ENCODE measurements at regions of chr19 and their contacts with region 1.

Region 1: DNA sequence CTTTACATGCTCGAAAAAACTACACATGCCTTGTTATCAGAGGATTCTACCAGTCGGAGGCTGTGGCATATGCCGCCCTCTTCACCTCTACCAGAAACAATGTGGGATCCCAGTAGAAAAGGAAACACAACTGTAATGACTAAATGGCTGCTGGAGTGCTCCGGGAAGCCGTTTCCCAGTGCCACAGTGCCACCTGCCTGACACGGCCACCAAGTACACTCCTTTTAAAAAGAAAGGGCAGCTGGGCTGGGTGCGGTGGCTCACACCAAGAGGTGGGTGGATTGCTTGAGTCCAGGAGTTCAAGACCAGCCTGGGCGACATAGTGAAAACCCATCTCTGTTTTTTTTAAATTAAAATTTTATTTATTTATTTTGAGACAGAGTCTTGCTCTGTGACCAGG is 67.3 kb downstream of the TRPM4 start:
- DNase-seq: peak in 4 of 5 donors; percentile 34 to 70 (median 46)
- ATAC-seq: peak; percentile 29 to 86 (median 77)
- H3K4me3 ChIP-seq: no peak overlapping the region
- H3K27ac ChIP-seq: no peak overlapping the region
- H3K4me1 ChIP-seq: peaks cover 0 to 6% (median 0%) of the 10 kb centered on the region in 12 donors
- H3K27me3 ChIP-seq: no peaks in the 10 kb centered on the region
- CTCF ChIP-seq: peak in 11 of 12 donors; percentile 22 to 53 (median 45)
- POLR2A ChIP-seq: no peak

Region 2: DNA sequence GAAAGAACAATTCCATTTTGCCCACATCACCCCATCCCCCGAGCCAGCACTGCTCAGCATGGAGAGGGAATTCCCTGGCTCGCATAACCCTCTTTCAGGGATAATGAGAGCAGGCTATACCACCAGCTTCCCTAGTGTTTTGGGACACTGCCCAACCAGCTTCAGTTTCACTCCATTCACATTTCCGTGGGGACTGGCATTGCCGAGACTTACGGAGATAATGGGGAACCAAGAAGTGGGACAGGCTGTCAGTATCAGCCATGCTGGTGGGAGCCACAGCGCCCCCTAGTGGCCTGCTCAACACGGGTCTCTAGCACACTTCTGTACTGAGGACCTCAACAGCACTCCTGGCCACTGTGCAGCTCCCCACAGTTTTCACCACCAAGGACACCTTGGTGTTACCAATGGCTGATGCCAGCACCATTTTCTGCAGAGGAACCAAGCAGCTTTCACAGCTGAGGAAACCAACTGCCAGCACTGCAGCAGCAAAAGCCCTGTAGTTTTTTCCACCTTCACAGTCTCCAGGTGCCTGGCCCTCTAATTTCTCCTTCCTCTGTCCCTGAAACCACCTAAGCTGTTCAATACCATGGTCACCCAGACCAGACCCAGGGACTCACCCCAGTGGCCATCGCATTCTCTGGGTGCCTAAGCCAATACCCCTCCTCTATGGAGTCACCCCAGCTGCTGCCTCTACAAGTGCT is 76.5 kb after region 1 on chr19:
- intact Hi-C with region 1: loop called in 6 of 10 experiments (anchors 1 to 10 kb)
- DNase-seq: peak; percentile 58 to 89 (median 74)
- ATAC-seq: peak; percentile 61 to 94 (median 90)
- H3K4me3 ChIP-seq: peak overlapping the region in 5 of 12 donors; percentile 15 to 43 (median 35)
- H3K27ac ChIP-seq: no peak overlapping the region
- H3K4me1 ChIP-seq: peaks cover 0 to 4% (median 0%) of the 10 kb centered on the region in 12 donors
- H3K27me3 ChIP-seq: no peaks in the 10 kb centered on the region
- CTCF ChIP-seq: peak; percentile 56 to 95 (median 80)
- POLR2A ChIP-seq: no peak